Right ventricle myocardium inferior (tissue), 1 donor: ENCODE measurements at regions of chrX and their contacts with region 1.

Region 1: DNA sequence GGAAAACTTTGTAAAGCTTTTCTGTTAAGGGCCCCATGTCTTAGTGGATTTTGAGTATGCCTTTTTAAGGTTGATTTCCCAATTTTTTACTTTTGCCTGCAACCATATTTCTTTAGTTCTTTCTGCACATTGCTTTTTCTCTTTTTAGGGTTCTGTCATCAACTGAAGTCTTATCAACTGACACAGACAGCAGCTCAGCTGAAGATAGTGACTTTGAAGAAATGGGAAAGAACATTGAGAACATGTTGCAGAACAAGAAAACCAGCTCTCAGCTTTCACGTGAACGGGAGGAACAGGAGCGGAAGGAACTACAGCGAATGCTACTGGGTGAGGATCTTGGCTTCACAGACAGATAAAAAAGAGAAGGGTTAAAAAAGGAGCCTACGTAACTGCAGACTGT is 27.8 kb downstream of the TAF1 start:
- DNase-seq: no peak
- ATAC-seq: no peak

Region 2: GRCh38 chrX:71439420-71439819 is 45.5 kb after region 1 on chrX:
- intact Hi-C with region 1: no loop called
- DNase-seq: no peak
- ATAC-seq: no peak

Region 3: DNA sequence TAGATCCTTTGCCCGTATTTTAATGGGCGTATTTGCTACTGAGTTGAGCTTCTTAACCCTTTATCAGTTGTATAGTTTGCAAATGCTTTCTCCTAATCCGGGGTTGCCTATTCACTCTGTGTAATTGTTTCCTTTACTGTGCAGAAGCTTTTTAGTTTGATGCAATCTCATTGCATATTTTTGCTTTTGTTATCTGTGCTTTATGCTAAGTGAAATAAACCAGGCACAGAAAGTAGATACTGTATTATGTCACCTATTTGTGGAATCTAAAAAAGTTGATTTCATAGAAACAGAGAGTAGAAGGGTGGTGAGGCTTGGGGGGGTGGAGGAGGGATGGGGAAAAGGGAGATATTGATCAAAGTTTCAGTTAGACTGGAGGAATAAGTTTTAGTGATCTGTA is 156.7 kb after region 1 on chrX:
- intact Hi-C with region 1: loop called (anchors 10 kb)
- DNase-seq: no peak
- ATAC-seq: no peak

Region 4: DNA sequence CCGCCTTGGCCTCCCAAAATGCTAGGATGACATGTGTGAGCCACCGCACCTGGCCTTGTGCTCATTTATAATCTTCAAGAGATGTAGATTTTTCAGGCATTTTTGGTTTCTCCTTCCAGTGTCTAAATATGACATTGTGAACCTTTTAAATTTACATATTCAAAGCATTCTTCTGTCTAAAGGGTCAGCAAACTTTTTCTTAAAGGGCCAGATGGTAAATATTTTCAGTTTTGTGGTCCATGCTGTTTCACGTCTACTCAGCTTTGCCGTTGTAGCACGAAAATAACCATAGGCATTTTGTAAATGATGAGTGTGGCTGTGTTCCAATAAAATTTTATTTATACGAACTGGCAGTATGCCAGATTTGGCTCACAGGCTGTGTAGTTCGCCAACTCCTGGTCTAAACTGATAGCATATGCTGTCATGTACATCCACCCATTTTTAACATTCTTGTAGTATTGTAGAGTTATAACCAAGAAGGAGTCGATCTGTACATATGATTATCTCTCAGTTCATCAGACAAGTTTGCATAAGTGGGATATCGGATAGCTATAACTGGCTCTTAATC is 171.6 kb after region 1 on chrX:
- intact Hi-C with region 1: no loop called
- DNase-seq: no peak
- ATAC-seq: no peak